GM10248 (cell line): ENCODE measurements at regions of chr4 and their contacts with region 1.

Region 1: GRCh38 chr4:27703771-27704170 is 843.1 kb downstream of the STIM2 start:
- DNase-seq: no peak
- CTCF ChIP-seq: no peak

Region 2: GRCh38 chr4:27568236-27568951 is 135.4 kb before region 1 on chr4:
- CTCF ChIA-PET with region 1: no interaction called
- POLR2A ChIA-PET with region 1: no interaction called
- DNase-seq: no peak
- CTCF ChIP-seq: no peak

Region 3: DNA sequence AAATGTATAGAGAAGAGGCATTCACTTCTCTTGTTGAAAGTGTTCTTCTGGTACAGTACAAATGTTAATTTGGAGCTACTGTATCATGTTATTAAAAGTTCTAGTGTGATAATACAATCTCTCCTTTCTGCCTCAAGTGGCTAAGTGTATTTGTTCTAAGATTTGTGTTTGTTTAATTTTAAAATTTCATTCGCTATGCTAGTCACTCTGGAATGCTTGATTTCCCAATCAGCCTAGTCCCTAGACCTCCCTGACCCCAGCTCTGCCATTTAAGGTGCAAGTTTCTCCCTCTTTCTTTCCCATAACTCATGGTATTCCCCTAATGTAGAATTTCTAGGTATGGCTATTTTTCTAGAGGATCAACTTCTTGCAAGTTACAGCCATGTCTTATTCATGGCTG is 25.7 kb before region 1 on chr4:
- CTCF ChIA-PET with region 1: no interaction called
- POLR2A ChIA-PET with region 1: no interaction called
- DNase-seq: no peak
- CTCF ChIP-seq: no peak

Region 4: DNA sequence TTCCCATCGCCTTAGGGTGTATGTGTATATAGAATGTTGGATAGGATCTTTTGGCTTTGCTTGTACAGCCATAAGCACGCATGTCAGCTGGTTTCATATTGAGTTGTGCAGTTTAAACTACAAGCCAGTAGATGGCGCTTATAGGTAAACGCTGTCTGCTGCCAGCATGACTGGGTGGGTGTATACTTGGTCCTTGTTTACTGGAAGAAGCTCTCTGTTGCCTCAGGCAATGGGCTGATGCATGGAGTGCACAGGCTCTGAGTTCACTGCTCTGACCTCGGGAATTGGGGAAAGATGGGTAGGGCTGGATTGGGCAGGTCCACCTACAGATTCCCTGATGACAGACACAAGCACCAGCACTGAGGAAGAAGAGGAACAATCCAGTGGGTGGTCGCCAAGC is 11.6 kb before region 1 on chr4:
- CTCF ChIA-PET with region 1: interaction called, 14 read pairs
- POLR2A ChIA-PET with region 1: no interaction called
- DNase-seq: peak; percentile 15
- CTCF ChIP-seq: peak; percentile 48